Pancreas (tissue), 10 donors: ENCODE measurements at regions of chr11 and their contacts with region 1.

Region 1: DNA sequence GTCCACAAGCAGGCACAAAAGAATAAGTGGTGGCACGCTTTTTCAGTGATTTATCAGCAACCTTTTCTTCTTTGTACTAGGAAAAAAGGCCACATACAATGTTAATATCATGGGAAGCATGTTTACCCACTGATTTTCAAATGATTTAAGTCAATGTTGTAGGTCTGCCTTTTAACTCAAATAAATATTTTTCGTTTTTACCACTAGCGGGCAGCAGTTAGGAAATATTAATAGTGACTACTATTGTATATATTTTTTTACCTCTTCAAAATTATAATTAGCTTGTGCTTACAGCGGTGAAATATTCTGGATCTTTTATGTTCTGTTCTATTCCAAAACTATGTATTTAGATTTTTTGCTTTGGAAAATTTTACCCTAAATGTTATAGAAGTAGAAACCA is 6.4 kb upstream of the SLC17A6 start:
- DNase-seq: no peak
- ATAC-seq: no peak
- H3K4me3 ChIP-seq: no peak overlapping the region
- H3K27ac ChIP-seq: no peak overlapping the region
- H3K4me1 ChIP-seq: no peaks in the 10 kb centered on the region
- H3K27me3 ChIP-seq: peaks cover 0 to 8% (median 3%) of the 10 kb centered on the region in 4 donors
- CTCF ChIP-seq: no peak

Region 2: DNA sequence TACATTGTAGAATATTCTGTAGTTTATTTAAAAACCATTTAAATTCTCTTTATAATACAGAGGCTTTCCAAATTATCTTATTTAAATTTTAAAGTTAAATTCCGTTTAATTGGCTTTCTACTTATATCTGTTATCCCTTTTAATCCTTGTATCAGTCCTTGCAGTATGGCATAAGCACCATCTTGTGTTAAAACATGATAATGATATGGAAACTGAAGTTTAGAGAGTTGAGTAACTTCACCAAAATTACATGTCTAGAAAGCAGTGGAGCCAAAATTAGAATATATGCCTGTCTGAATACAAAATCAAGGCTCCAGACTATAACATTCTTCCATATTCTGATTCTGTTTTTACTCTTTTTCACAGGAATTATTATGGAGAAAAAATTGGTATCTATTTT is 81.9 kb before region 1 on chr11:
- intact Hi-C with region 1: no loop called
- DNase-seq: no peak
- ATAC-seq: no peak
- H3K4me3 ChIP-seq: no peak overlapping the region
- H3K27ac ChIP-seq: no peak overlapping the region
- H3K4me1 ChIP-seq: no peaks in the 10 kb centered on the region
- H3K27me3 ChIP-seq: no peaks in the 10 kb centered on the region
- CTCF ChIP-seq: no peak

Region 3: DNA sequence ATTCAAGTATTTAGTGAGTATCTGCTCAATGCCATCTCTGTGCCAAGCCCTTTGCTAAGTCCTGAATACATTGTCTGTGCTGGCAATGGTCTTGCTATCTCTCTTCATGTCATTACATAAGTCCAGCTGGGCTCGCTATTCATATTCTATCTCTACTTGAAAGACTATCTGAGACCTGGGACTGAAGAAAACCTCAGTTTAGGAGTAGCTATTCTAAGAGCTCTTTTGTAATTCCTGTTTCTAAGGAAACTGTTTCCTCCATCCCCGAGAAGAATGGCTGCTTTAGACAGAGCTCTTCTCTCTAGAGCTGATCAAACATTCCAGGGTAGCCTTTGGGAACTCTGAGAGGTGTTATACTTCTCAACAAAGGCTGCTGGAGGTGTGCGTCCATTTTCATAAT is 39.4 kb after region 1 on chr11:
- intact Hi-C with region 1: no loop called
- DNase-seq: no peak
- ATAC-seq: no peak
- H3K4me3 ChIP-seq: no peak overlapping the region
- H3K27ac ChIP-seq: no peak overlapping the region
- H3K4me1 ChIP-seq: no peaks in the 10 kb centered on the region
- H3K27me3 ChIP-seq: no peaks in the 10 kb centered on the region
- CTCF ChIP-seq: no peak

Region 4: GRCh38 chr11:22787551-22788162 is 455.9 kb after region 1 on chr11:
- intact Hi-C with region 1: loop called in 1 of 3 experiments (anchors 5 kb)
- DNase-seq: peak in 2 of 6 donors; percentile 8 to 23
- ATAC-seq: peak; percentile 71 to 93 (median 90)
- H3K4me3 ChIP-seq: no peak overlapping the region
- H3K27ac ChIP-seq: no peak overlapping the region
- H3K4me1 ChIP-seq: no peaks in the 10 kb centered on the region
- H3K27me3 ChIP-seq: no peaks in the 10 kb centered on the region
- CTCF ChIP-seq: peak; percentile 33 to 64 (median 47)